PC-3 (cell line): ENCODE measurements at regions of chr6 and their contacts with region 1.

Region 1: GRCh38 chr6:165060726-165061125 is 248.7 kb downstream of the C6orf118 start:
- DNase-seq: peak; percentile 66
- ATAC-seq: peak; percentile 62
- H3K4me3 ChIP-seq: no peak overlapping the region
- H3K27ac ChIP-seq: peak overlapping the region; percentile 81
- H3K4me1 ChIP-seq: peaks cover 37% of the 10 kb centered on the region
- H3K27me3 ChIP-seq: no peaks in the 10 kb centered on the region
- CTCF ChIP-seq: no peak

Region 2: DNA sequence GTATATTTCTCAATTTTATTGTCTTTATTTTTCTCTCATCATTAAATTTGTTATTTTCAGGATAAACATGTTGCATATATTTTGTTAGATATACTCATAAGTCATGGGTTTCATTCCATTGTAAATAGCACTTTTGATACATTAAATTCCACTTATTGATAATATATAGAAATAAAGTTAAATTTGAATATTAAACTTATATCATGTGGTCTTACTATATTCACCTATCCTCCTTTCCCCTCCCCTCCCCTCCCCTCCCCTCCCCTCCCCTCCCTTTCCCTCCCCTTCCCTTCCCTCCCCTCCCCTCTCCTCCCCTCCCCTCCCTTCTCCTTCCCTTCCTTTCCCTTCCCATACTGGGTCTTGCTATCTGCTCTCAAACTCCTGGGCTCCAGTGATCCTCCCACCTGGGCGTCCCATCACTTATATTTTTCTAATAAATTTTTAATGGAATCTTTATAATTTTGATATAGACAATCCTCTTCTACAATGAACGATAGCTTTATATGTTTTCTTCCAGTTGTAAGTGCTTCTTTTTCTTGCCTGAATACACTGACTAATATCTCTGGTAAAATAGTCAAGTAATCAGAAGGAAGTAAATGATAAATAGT is 443.7 kb before region 1 on chr6:
- CTCF ChIA-PET with region 1: no interaction called
- POLR2A ChIA-PET with region 1: no interaction called
- intact Hi-C with region 1: no loop called
- DNase-seq: no peak
- ATAC-seq: no peak
- H3K4me3 ChIP-seq: no peak overlapping the region
- H3K27ac ChIP-seq: no peak overlapping the region
- H3K4me1 ChIP-seq: no peaks in the 10 kb centered on the region
- H3K27me3 ChIP-seq: no peaks in the 10 kb centered on the region
- CTCF ChIP-seq: no peak

Region 3: DNA sequence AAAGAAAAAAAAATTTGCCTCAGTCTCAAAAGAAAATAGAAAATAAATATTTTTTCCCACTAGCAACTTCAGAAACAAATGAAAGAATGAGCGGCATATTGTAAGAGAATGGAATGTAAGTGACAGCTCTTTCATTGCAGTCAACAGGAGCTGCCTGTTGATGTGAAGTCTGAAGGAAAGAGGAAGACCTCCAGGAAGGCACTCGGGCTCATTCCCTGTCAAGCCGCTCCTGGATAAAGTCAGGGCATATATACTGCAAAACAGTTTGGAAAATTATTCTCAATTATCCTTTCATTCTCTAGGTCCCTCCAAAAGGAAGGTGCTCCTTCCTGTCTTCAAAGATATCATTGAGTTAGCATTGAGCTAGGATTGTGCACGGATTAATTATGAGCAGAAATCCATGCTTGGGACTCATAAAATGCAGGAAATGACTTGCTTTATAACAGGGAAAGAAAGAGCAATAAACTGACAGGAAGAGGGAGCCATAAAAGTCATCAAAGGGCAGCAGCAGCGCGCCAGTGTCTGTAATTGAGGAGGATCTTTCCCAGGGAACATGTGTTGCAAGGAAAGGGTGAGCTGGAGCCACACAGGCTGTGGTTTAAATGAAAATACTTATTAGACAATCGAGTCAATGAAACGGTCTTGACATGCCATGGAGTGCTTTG is 30.5 kb after region 1 on chr6:
- CTCF ChIA-PET with region 1: no interaction called
- POLR2A ChIA-PET with region 1: no interaction called
- intact Hi-C with region 1: loop called (anchors 2 kb)
- DNase-seq: peak; percentile 17
- ATAC-seq: peak; percentile 45
- H3K4me3 ChIP-seq: no peak overlapping the region
- H3K27ac ChIP-seq: peak overlapping the region; percentile 37; the same call in 1 of the 2 replicates
- H3K4me1 ChIP-seq: peaks cover 13% of the 10 kb centered on the region; the same call in 1 of the 2 replicates
- H3K27me3 ChIP-seq: no peaks in the 10 kb centered on the region
- CTCF ChIP-seq: no peak